ENCODE measurements at regions of chr20 and their contacts with region 1.

Region 1: GRCh38 chr20:4174909-4175308 is 159.6 kb upstream of the RNF24 start:
- DNase-seq: no peak
- ATAC-seq: no peak
- H3K4me3 ChIP-seq: no peak overlapping the region
- H3K27ac ChIP-seq: no peak overlapping the region
- H3K4me1 ChIP-seq: peaks cover 0 to 13% (median 0%) of the 10 kb centered on the region in 3 donors
- H3K27me3 ChIP-seq: no peaks in the 10 kb centered on the region
- CTCF ChIP-seq: no peak

Region 2: DNA sequence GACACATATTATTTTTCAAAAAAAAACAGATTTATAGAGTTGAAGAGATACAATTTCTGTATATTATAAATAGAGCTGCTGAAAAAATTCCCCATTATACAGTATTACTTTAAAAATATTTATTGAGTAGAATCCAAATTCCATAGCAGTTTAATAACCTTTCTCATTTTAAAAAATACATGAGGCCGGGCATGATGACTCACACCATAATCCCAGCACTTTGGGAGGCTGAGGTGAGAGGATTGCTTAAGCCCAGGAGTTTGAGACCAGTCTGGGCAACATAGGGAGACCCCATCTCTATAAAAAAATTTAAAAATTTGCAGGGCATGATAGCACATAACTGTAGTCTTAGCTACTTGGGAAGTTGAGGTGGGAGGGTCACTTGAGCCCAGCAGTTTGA is 691.1 kb before region 1 on chr20:
- intact Hi-C with region 1: no loop called
- DNase-seq: no peak
- ATAC-seq: peak; percentile 48 to 70 (median 52)
- H3K4me3 ChIP-seq: no peak overlapping the region
- H3K27ac ChIP-seq: peak overlapping the region in 1 of 4 donors; percentile 2
- H3K4me1 ChIP-seq: peaks cover 8 to 24% (median 10%) of the 10 kb centered on the region in 3 donors
- H3K27me3 ChIP-seq: no peaks in the 10 kb centered on the region
- CTCF ChIP-seq: no peak

Region 3: GRCh38 chr20:4108495-4109306 is 66.2 kb before region 1 on chr20:
- intact Hi-C with region 1: loop called in 1 of 3 experiments (anchors 2 kb)
- DNase-seq: peak in 4 of 6 donors; percentile 48 to 80 (median 54)
- ATAC-seq: peak; percentile 88 to 97 (median 95)
- H3K4me3 ChIP-seq: no peak overlapping the region
- H3K27ac ChIP-seq: no peak overlapping the region
- H3K4me1 ChIP-seq: no peaks in the 10 kb centered on the region
- H3K27me3 ChIP-seq: no peaks in the 10 kb centered on the region
- CTCF ChIP-seq: peak; percentile 67 to 96 (median 91)